ENCODE measurements at regions of chr9 and their contacts with region 1.

Region 1: DNA sequence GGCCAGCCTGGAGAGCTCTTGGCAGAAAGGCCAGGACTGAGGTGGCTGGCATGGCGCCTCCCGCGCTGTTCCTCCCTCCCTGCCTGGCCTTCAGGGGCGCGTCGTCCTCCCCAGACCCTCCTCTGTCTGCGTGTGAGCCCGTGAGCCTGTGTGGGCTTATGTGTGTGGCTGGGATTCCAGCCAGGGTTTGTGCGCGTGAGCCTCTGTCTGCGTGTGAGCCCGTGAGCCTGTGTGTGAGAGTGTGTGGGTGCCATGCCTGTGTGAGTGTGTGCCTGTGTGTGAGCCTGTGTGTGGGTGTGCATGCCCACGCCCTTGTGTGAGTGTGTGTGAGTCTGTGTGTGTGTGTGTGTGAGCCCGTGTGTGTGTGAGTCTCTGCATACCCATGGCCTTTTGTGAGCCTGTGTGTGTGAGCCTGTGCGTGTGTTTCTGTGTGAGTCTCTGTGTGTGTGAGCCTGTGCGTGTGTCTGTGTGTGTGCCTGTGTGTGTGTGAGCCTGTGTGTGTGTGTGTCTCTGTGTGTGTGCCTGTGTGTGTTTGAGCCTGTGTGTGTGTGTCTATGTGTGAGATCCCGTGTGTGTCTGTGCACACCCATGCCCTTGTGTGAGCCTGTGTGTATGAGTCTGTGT is 13.0 kb downstream of the RXRA start:
- DNase-seq: no peak
- ATAC-seq: no peak
- H3K4me3 ChIP-seq: peak overlapping the region; percentile 16 to 47 (median 24)
- H3K27ac ChIP-seq: peak overlapping the region; percentile 87 to 96 (median 94)
- H3K4me1 ChIP-seq: peaks cover 97% of the 10 kb centered on the region in 2 donors
- H3K27me3 ChIP-seq: no peaks in the 10 kb centered on the region
- CTCF ChIP-seq: no peak
- POLR2A ChIP-seq: no peak

Region 2: GRCh38 chr9:134316449-134317160 is 22.7 kb before region 1 on chr9:
- in situ Hi-C with region 1: no loop called
- intact Hi-C with region 1: no loop called
- DNase-seq: no peak
- ATAC-seq: no peak
- H3K4me3 ChIP-seq: no peak overlapping the region
- H3K27ac ChIP-seq: no peak overlapping the region
- H3K4me1 ChIP-seq: no peaks in the 10 kb centered on the region
- H3K27me3 ChIP-seq: peaks cover 0 to 1% (median 0%) of the 10 kb centered on the region in 3 donors
- CTCF ChIP-seq: no peak
- POLR2A ChIP-seq: no peak

Region 3: GRCh38 chr9:134349936-134350704 is 10.8 kb after region 1 on chr9:
- in situ Hi-C with region 1: no loop called
- intact Hi-C with region 1: loop called (anchors 2 kb)
- DNase-seq: no peak
- ATAC-seq: no peak
- H3K4me3 ChIP-seq: no peak overlapping the region
- H3K27ac ChIP-seq: peak overlapping the region; percentile 85 to 94 (median 88)
- H3K4me1 ChIP-seq: peaks cover 97 to 100% of the 10 kb centered on the region in 2 donors
- H3K27me3 ChIP-seq: no peaks in the 10 kb centered on the region
- CTCF ChIP-seq: no peak
- POLR2A ChIP-seq: no peak

Region 4: DNA sequence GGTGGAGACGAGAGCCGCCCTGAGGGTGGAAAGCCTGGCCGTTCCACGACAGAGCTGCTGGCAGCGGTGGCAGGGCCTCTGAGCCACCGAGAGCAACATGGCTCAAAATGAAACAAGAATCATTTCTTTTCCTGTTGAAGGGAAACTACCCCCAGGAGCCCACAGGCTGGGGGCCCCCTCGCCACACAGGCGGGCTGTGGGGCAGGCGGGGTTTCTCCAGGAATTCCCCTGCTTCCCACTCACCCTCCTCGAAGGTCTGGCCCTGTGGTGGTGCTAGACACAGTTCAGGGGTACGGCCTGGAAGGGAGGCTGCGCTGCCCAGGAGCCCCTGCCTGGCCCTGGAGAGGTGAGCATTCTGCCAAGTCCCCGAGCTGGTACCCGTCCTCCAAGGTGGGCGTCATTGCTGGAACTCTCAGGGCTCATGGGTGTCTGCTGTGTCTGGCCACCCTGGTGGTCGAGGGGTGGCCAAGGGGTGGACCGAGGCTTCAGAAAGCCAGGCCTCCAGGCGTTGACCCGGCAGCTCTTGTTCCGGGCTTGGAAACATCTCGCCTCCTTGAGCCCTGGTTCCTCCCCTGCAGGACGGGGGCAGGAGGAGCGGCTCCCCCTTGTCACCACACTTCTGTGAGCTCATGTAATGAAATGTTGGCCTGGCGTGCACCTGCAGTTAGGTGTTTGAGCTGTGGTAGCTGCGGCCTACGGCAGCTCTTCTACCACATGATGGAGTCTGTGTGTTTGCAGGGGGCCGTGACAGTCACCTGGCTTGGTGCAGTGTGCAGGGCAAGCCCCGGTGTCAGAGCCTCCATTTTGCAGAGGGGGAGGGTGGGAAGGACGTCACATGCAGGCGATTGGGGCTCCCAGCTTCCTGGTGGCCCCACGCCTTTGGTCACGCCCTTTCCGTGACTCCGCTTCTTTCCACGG is 52.3 kb after region 1 on chr9:
- in situ Hi-C with region 1: no loop called
- intact Hi-C with region 1: no loop called
- DNase-seq: no peak
- ATAC-seq: no peak
- H3K4me3 ChIP-seq: no peak overlapping the region
- H3K27ac ChIP-seq: peak overlapping the region in 3 of 4 donors; percentile 10 to 27 (median 25)
- H3K4me1 ChIP-seq: peaks cover 78 to 94% of the 10 kb centered on the region in 2 donors
- H3K27me3 ChIP-seq: no peaks in the 10 kb centered on the region
- CTCF ChIP-seq: no peak
- POLR2A ChIP-seq: no peak

Region 5: GRCh38 chr9:134449221-134449894 is 110.1 kb after region 1 on chr9:
- in situ Hi-C with region 1: loop called in 2 of 4 experiments (anchors 10 to 25 kb)
- intact Hi-C with region 1: no loop called
- DNase-seq: peak; percentile 83 to 87
- ATAC-seq: peak; percentile 84 to 85
- H3K4me3 ChIP-seq: no peak overlapping the region
- H3K27ac ChIP-seq: no peak overlapping the region
- H3K4me1 ChIP-seq: no peaks in the 10 kb centered on the region
- H3K27me3 ChIP-seq: no peaks in the 10 kb centered on the region
- CTCF ChIP-seq: peak; percentile 60 to 87 (median 84)
- POLR2A ChIP-seq: no peak

Measured in gastrocnemius medialis (tissue), 4 donors.